GM12878 (cell line): ENCODE measurements at regions of chr12 and their contacts with region 1.

Region 1: GRCh38 chr12:82358200-82359114 is at the starts of genes CCDC59 and METTL25:
- DNase-seq: peak; percentile 90
- ATAC-seq: peak; percentile 93
- H3K4me3 ChIP-seq: peak within 1 kb of the TSS; percentile 91
- H3K27ac ChIP-seq: peak within 1 kb of the TSS; percentile 99
- H3K4me1 ChIP-seq: no peaks in the 10 kb centered on the region
- H3K27me3 ChIP-seq: no peaks in the 10 kb centered on the region
- CTCF ChIP-seq: peak; percentile 60 to 96 (median 95)
- EP300 ChIP-seq: peak; percentile 73 to 87; a peak in 3 of 4 replicates
- POLR2A ChIP-seq: peak; percentile 99
- RAD21 ChIP-seq: peak; percentile 40
- polyA plus RNA-seq, gene CCDC59: 94.7 to 98.6 TPM
- polyA plus RNA-seq, gene METTL25: 6.6 to 7.0 TPM

Region 2: GRCh38 chr12:80807640-80808288 is 1550.7 kb before region 1 on chr12:
- CTCF ChIA-PET with region 1: no interaction called
- POLR2A ChIA-PET with region 1: no interaction called
- RAD21 ChIA-PET with region 1: no interaction called
- SMC1A ChIA-PET with region 1: no interaction called
- in situ Hi-C with region 1: loop called (anchors 25 kb)
- intact Hi-C with region 1: no loop called
- DNase-seq: peak; percentile 59
- ATAC-seq: peak; percentile 95
- H3K4me3 ChIP-seq: no peak overlapping the region
- H3K27ac ChIP-seq: no peak overlapping the region
- H3K4me1 ChIP-seq: peaks cover 23% of the 10 kb centered on the region
- H3K27me3 ChIP-seq: no peaks in the 10 kb centered on the region
- CTCF ChIP-seq: no peak
- EP300 ChIP-seq: peak in 1 of 2 experiments; percentile 39; a peak in 1 of 4 replicates
- POLR2A ChIP-seq: no peak
- RAD21 ChIP-seq: no peak

Region 3: GRCh38 chr12:83404521-83404920 is 1046.1 kb after region 1 on chr12:
- CTCF ChIA-PET with region 1: no interaction called
- POLR2A ChIA-PET with region 1: no interaction called
- RAD21 ChIA-PET with region 1: no interaction called
- SMC1A ChIA-PET with region 1: no interaction called
- in situ Hi-C with region 1: no loop called
- intact Hi-C with region 1: no loop called
- DNase-seq: no peak
- ATAC-seq: no peak
- H3K4me3 ChIP-seq: no peak overlapping the region
- H3K27ac ChIP-seq: no peak overlapping the region
- H3K4me1 ChIP-seq: no peaks in the 10 kb centered on the region
- H3K27me3 ChIP-seq: no peaks in the 10 kb centered on the region
- CTCF ChIP-seq: no peak
- EP300 ChIP-seq: no peak
- POLR2A ChIP-seq: no peak
- RAD21 ChIP-seq: no peak